Activated T-helper 2 cell treated with anti-CD3 and anti-CD28 coated beads, Interferon-gamma antibody, Interleukin-2, Interleukin-4, amounts not matched to agents 10 μg/mL and 5 μg/mL and 100 μg/mL, durations not matched to agents 14 hours and 24 hours and 36 hours (primary cell): ENCODE measurements at regions of chr4 and their contacts with region 1.

Region 1: DNA sequence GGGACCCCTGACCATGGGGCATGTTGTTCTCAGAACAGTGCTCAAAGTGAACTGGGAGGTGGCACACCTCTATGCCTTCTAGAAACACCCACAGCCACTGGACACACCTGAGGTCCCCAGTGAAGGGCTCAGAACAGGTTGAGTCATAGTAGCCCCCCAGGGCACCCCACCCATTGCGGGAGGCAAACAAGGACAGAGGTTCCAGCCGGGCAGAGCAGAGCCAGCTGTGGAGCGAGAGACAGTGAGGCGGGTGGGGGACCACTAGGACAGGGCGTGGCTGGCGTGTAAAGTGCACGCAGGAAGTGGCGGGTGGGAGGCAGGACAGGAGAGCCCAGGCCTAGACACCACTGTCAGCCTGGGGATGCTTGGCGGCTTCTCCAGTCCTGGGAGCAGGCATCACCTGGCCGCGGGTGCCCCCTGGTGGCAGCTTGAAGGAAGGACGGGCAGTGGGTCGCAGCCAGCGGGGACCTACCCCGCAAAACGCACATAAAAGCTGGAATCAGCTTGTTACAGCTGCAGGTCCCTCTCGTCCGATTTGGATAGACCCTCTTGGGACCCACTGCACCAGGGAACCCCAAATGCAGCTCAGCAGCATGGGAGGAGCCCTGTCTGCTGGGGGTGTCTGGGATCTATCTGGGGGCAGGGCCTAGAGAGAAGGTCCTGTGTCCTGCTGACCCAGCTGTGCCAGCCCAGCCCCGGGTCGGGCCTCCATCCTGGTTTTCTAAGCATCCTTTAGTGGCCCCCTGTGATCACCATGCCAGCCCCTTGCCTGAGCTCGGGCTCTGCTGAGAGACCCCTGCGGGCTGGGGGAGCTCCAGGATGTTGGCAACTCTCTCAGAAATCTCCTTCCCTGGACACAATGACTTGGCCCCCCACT is 57.6 kb downstream of the WFS1 start:
- DNase-seq: peak; percentile 62
- H3K4me3 Mint-ChIP-seq: no peak overlapping the region
- H3K27ac Mint-ChIP-seq: no peak overlapping the region
- H3K4me1 Mint-ChIP-seq: no peaks in the 10 kb centered on the region
- H3K27me3 Mint-ChIP-seq: peaks cover 25% of the 10 kb centered on the region

Region 2: GRCh38 chr4:5998333-5998936 is 328.8 kb before region 1 on chr4:
- intact Hi-C with region 1: loop called (anchors 1 kb)
- DNase-seq: peak; percentile 24
- H3K4me3 Mint-ChIP-seq: no peak overlapping the region
- H3K27ac Mint-ChIP-seq: no peak overlapping the region
- H3K4me1 Mint-ChIP-seq: no peaks in the 10 kb centered on the region
- H3K27me3 Mint-ChIP-seq: no peaks in the 10 kb centered on the region

Region 3: DNA sequence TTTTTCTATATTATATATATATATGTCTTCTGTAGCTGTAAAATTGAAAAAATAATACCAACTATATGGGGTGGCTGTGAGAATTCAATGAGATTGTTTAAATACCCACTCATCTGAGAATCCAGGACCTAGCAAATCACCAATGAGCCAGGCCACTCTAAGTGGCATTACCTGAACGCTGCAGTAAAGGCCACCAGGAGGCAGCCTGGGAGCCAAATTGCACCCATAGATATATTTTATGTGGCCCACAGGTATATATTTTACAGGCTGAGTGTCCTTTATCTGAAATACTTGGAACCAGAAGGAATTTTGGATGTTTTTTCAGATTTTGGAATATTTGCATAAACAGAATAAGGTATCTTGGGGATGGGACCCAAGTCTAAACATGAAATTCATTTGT is 250.9 kb before region 1 on chr4:
- intact Hi-C with region 1: loop called (anchors 5 kb)
- DNase-seq: no peak
- H3K4me3 Mint-ChIP-seq: no peak overlapping the region
- H3K27ac Mint-ChIP-seq: no peak overlapping the region
- H3K4me1 Mint-ChIP-seq: no peaks in the 10 kb centered on the region
- H3K27me3 Mint-ChIP-seq: no peaks in the 10 kb centered on the region

Region 4: GRCh38 chr4:6250235-6250983 is 76.9 kb before region 1 on chr4:
- intact Hi-C with region 1: loop called (anchors 1 kb)
- DNase-seq: no peak
- H3K4me3 Mint-ChIP-seq: no peak overlapping the region
- H3K27ac Mint-ChIP-seq: no peak overlapping the region
- H3K4me1 Mint-ChIP-seq: no peaks in the 10 kb centered on the region
- H3K27me3 Mint-ChIP-seq: peaks cover 35% of the 10 kb centered on the region